ENCODE measurements at regions of chr1 and their contacts with region 1.

Region 1: DNA sequence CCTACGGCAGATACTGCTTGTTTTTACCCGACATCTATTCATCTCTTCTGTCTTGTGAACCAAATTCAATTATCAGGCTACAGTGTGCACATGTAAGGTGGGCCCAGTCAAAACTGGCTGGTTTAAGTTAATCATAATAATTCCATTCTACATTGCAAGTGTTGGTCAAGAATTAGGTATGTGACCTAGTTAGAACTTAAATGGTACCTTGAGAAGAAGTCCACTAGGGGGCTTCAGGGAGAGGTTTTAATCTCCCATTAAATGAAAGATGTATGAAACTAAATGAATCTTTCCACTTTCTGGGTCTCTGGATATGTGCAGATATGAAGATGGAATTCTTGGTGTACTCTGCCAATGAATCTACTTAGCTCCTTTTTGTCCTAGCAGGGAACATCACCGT is 187.1 kb downstream of the CDC42BPA start:
- DNase-seq: peak; percentile 6
- H3K4me3 ChIP-seq: no peak overlapping the region
- H3K27ac ChIP-seq: no peak overlapping the region
- H3K4me1 ChIP-seq: no peaks in the 10 kb centered on the region
- H3K27me3 ChIP-seq: no peaks in the 10 kb centered on the region
- CTCF ChIP-seq: peak; percentile 45 to 47

Region 2: GRCh38 chr1:227219715-227220292 is 88.6 kb after region 1 on chr1:
- CTCF ChIA-PET with region 1: no interaction called
- dilution Hi-C with region 1: loop called (anchors 5 kb)
- in situ Hi-C with region 1: no loop called
- intact Hi-C with region 1: no loop called
- DNase-seq: no peak
- H3K4me3 ChIP-seq: no peak overlapping the region
- H3K27ac ChIP-seq: no peak overlapping the region
- H3K4me1 ChIP-seq: no peaks in the 10 kb centered on the region
- H3K27me3 ChIP-seq: no peaks in the 10 kb centered on the region
- CTCF ChIP-seq: no peak

Region 3: DNA sequence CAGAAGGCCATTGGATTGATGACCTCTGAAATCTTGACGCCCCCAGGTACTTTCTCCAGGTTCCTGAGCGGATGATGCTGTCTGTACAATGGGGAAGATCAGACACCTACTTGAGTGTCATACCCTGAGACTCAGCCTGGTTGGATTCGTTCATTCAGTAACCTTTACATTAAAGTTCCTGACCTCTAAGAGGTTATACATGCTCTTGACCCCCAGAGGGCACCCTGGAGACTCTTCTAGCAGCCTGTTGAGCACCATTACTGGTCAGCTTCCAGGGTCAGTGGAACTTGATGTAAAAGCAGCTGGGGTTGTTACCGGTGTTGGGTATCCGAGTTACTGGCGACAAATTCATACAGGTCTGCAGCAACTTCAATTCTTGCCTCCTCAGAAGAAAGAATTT is 317.9 kb after region 1 on chr1:
- CTCF ChIA-PET with region 1: no interaction called
- dilution Hi-C with region 1: no loop called
- in situ Hi-C with region 1: loop called (anchors 10 to 25 kb)
- intact Hi-C with region 1: no loop called
- DNase-seq: no peak
- H3K4me3 ChIP-seq: no peak overlapping the region
- H3K27ac ChIP-seq: no peak overlapping the region
- H3K4me1 ChIP-seq: no peaks in the 10 kb centered on the region
- H3K27me3 ChIP-seq: no peaks in the 10 kb centered on the region
- CTCF ChIP-seq: peak; percentile 45 to 53

Measured in mammary epithelial cell (primary cell).